Aorta (tissue), 5 donors: ENCODE measurements at regions of chr11 and their contacts with region 1.

Region 1: GRCh38 chr11:1820463-1821325 is 14.1 kb upstream of the SYT8 start:
- DNase-seq: no peak
- ATAC-seq: no peak
- H3K4me3 ChIP-seq: no peak overlapping the region
- H3K27ac ChIP-seq: peak overlapping the region in 1 of 2 donors; percentile 68
- H3K4me1 ChIP-seq: no peaks in the 10 kb centered on the region
- H3K27me3 ChIP-seq: no peaks in the 10 kb centered on the region

Region 2: GRCh38 chr11:1765871-1766718 is 54.6 kb before region 1 on chr11:
- intact Hi-C with region 1: loop called in 1 of 2 experiments (anchors 5 kb)
- DNase-seq: no peak
- ATAC-seq: no peak
- H3K4me3 ChIP-seq: no peak overlapping the region
- H3K27ac ChIP-seq: no peak overlapping the region
- H3K4me1 ChIP-seq: no peaks in the 10 kb centered on the region
- H3K27me3 ChIP-seq: no peaks in the 10 kb centered on the region

Region 3: DNA sequence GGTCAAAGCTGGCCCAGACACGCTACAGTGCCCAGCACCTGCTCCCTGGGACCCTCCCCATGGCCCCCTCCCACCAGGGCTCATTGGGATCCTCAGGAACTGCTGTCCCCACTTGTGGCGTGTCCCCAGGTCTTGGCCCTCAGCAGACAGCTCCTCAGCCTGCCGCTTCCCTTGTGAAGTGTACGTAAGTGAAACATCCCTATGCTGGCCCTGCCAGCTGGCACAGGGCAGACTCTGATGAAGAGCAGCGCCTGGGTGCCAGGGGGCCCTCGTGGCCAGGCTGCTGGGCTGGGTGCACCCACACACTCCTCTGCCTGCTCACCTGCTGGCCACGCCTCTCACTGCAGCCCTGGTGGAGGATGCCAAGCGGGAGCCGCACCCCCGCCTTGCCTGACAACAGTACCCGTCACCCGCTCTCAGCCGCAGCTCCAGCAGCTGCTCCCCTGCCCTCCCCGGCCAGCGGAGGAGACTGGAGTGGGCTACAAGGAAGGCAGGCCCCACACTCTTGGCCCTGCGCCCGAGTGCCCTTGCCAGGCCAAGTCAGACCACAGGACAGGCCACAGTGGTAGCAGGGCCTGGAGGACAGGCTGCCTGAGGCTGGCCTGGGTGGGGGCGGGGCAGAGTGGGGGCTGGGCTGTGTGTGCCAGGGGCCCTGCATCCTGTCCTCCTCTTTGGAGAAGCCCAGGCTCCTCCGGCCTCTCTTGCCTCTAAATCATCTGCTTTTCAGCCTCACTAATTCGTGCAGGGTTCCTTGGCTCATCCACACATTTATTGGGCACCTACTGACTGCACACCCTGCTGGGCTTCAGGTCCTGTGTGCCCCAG is 279.0 kb after region 1 on chr11:
- intact Hi-C with region 1: no loop called
- DNase-seq: peak in 1 of 2 donors; percentile 70
- ATAC-seq: no peak
- H3K4me3 ChIP-seq: no peak overlapping the region
- H3K27ac ChIP-seq: no peak overlapping the region
- H3K4me1 ChIP-seq: no peaks in the 10 kb centered on the region
- H3K27me3 ChIP-seq: no peaks in the 10 kb centered on the region